ENCODE measurements at regions of chr2 and their contacts with region 1.

Region 1: DNA sequence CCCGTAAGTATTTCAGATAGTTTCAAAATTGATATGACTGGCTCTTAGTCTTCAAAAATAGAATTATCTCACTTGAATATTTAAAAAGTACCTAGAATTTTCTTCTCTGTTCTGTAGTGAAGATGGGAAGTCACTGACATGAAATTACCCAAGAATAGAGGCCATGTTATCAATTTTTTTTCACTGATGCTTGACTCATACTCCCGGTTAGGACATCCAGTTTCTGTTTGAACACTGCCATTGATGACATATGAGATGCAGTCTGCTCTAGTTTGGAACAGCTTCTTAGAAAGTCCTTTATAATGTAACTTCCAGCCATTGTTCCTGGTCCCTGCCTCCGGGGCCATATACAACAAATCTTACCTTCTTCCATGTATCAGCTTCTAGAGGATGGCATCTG is 26.0 kb downstream of the MAP3K20 start:
- DNase-seq: no peak
- H3K4me3 Mint-ChIP-seq: no peak overlapping the region
- H3K27ac Mint-ChIP-seq: peak overlapping the region; percentile 4
- H3K4me1 Mint-ChIP-seq: peaks cover 31% of the 10 kb centered on the region
- H3K27me3 Mint-ChIP-seq: no peaks in the 10 kb centered on the region

Region 2: GRCh38 chr2:173090276-173090877 is 11.3 kb before region 1 on chr2:
- intact Hi-C with region 1: loop called (anchors 1 kb)
- DNase-seq: no peak
- H3K4me3 Mint-ChIP-seq: no peak overlapping the region
- H3K27ac Mint-ChIP-seq: no peak overlapping the region
- H3K4me1 Mint-ChIP-seq: no peaks in the 10 kb centered on the region
- H3K27me3 Mint-ChIP-seq: no peaks in the 10 kb centered on the region

Region 3: DNA sequence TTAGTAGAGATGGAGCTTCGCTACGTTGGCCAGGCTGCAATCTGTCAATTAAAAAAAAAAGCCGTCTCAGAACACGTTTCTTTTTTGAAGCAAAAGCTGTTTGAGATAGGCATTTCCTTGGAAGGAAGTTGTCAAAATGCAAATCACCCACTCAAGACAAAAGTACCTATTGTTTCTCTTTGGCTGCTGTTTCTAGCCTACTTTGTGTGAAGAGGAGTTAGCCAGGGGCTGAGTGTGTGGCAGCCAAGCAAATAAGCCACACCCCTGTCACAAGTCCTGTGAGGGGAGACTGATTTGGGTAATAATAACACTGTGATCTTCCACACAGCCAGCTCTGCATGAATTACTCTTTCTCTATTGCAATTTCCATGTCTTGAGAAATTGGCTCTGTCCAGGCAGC is 205.6 kb after region 1 on chr2:
- intact Hi-C with region 1: no loop called
- DNase-seq: no peak
- H3K4me3 Mint-ChIP-seq: no peak overlapping the region
- H3K27ac Mint-ChIP-seq: no peak overlapping the region
- H3K4me1 Mint-ChIP-seq: peaks cover 5% of the 10 kb centered on the region
- H3K27me3 Mint-ChIP-seq: peaks cover 1% of the 10 kb centered on the region

Region 4: GRCh38 chr2:173914055-173914934 is 812.6 kb after region 1 on chr2:
- intact Hi-C with region 1: loop called (anchors 5 kb)
- DNase-seq: no peak
- H3K4me3 Mint-ChIP-seq: no peak overlapping the region
- H3K27ac Mint-ChIP-seq: no peak overlapping the region
- H3K4me1 Mint-ChIP-seq: peaks cover 38% of the 10 kb centered on the region
- H3K27me3 Mint-ChIP-seq: no peaks in the 10 kb centered on the region